Activated naive CD4-positive, alpha-beta T cell treated with anti-CD3 and anti-CD28 coated beads, Interleukin-2, amount 10 ng/mL, durations not matched to agents 7 days and 5 days (primary cell): ENCODE measurements at regions of chr1 and their contacts with region 1.

Region 1: DNA sequence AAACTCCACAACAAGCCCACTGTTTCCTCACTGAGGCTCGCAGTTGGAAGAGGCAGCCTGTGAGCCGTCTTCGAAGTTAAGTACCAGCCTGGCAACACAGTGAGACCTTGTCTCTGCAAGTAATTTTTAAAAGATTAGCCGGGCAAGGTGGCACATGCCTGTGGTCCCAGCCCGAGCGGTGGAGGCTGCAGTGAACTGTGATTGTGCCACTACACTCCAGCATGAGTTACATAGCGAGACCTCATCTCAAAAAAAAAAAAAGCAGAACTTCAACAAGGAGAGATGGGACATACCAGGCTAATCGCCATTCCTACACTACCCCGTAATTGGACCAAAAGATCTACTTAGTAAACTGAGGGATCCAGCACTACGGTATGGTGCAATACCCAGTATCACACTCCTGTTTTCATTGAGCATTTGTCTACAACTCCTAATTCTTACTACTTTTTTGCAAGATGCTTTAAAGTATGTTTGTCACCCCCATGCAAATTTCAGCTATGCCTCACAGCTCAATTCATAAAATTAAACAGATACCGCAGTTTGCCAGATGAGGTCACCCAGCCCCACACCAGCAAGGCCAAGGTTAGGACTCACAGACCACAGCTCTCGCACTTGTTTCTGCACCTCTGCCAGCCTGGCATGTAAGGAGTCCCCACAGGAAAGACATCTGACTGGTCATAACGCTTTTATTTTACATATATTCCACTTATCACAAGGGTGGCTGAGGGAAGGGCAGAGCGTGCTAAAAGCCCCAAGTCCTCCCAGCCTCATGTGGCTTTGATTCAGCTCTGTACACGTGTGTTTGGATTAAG is 21.0 kb downstream of the SDE2 start:
- DNase-seq: no peak
- H3K4me3 Mint-ChIP-seq: no peak overlapping the region
- H3K27ac Mint-ChIP-seq: peak overlapping the region; percentile 60
- H3K4me1 Mint-ChIP-seq: peaks cover 4% of the 10 kb centered on the region
- H3K27me3 Mint-ChIP-seq: no peaks in the 10 kb centered on the region

Region 2: GRCh38 chr1:225179686-225180085 is 798.5 kb before region 1 on chr1:
- CTCF ChIA-PET with region 1: no interaction called
- DNase-seq: no peak
- H3K4me3 Mint-ChIP-seq: no peak overlapping the region
- H3K27ac Mint-ChIP-seq: no peak overlapping the region
- H3K4me1 Mint-ChIP-seq: peaks cover 6% of the 10 kb centered on the region
- H3K27me3 Mint-ChIP-seq: no peaks in the 10 kb centered on the region

Region 3: DNA sequence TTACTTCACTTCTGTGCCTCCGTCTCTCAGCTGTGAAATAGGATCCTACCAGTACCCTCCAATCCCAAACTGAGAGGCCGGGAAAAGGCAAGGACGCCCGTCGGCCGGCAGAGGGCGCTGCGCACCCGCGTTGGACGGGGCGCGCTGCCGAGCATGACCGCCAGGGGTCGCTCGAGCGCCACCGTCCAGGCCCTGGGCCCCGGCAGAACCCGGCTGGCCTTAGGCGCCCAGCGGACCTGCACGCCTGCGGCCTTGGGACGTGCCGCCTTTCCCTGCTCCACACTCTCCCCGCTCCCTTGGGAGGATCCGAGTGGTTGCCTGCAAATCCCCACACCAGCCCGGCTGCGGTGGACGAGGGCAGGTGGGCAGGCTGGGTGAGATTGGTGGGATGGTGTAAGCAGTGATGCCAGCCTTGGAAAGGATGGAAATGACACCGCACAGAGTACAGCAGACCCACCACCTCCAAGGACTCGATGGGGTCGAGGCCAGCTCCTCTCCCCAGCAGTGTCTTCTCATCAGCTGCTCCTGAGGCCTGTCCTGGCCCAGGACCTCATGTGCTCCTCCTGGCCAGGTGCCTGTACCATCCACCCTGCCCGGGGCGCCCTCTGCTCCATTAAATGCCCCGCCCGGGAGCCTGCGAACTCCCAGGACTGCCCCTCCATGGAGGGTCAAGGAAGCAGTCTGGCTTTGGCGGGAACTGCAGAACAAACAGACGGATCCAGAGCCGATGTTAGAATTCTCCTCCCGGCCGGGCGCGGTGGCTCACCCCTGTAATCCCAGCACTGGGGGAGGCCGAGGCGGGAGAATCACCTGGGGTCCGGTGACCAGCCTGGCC is 502.9 kb before region 1 on chr1:
- CTCF ChIA-PET with region 1: interaction called, 32 read pairs
- DNase-seq: peak; percentile 63
- H3K4me3 Mint-ChIP-seq: no peak overlapping the region
- H3K27ac Mint-ChIP-seq: peak overlapping the region; percentile 68
- H3K4me1 Mint-ChIP-seq: peaks cover 67% of the 10 kb centered on the region
- H3K27me3 Mint-ChIP-seq: peaks cover 9% of the 10 kb centered on the region

Region 4: GRCh38 chr1:225480825-225481434 is 497.2 kb before region 1 on chr1:
- CTCF ChIA-PET with region 1: interaction called, 32 read pairs
- DNase-seq: peak; percentile 73
- H3K4me3 Mint-ChIP-seq: no peak overlapping the region
- H3K27ac Mint-ChIP-seq: no peak overlapping the region
- H3K4me1 Mint-ChIP-seq: peaks cover 33% of the 10 kb centered on the region
- H3K27me3 Mint-ChIP-seq: peaks cover 36% of the 10 kb centered on the region

Region 5: GRCh38 chr1:225677350-225678124 is 300.6 kb before region 1 on chr1:
- CTCF ChIA-PET with region 1: no interaction called
- DNase-seq: no peak
- H3K4me3 Mint-ChIP-seq: no peak overlapping the region
- H3K27ac Mint-ChIP-seq: no peak overlapping the region
- H3K4me1 Mint-ChIP-seq: no peaks in the 10 kb centered on the region
- H3K27me3 Mint-ChIP-seq: peaks cover 36% of the 10 kb centered on the region

Region 6: DNA sequence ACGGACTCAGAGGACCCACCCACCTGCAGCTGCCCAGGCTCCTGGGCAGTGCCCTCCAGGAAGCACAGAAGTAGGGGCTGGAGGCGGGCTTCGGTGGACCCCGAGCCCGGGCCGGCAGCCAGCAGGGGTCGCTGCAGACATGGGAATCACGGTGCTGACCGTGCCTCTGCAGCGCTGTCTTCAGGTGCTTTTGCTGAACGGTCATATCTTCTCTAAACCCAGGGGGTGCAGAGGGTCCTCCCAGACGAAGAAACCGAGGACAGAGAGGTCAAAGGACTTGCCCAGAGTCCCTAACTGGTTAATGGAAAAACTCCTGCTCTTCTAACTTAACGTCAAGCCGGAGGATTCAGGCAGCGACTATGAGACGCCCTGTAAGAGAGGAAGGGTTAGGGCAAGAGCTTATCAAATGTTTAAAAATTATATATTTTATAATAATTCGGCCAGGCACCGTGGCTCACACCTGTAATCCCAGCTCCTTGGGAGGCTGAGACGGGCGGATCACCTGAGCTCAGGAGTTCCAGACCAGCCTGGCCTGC is 15.6 kb before region 1 on chr1:
- CTCF ChIA-PET with region 1: interaction called, 27 read pairs
- DNase-seq: peak; percentile 70
- H3K4me3 Mint-ChIP-seq: no peak overlapping the region
- H3K27ac Mint-ChIP-seq: no peak overlapping the region
- H3K4me1 Mint-ChIP-seq: peaks cover 2% of the 10 kb centered on the region
- H3K27me3 Mint-ChIP-seq: peaks cover 31% of the 10 kb centered on the region

Region 7: GRCh38 chr1:226004396-226004795 is 26.3 kb after region 1 on chr1:
- CTCF ChIA-PET with region 1: no interaction called
- DNase-seq: no peak
- H3K4me3 Mint-ChIP-seq: no peak overlapping the region
- H3K27ac Mint-ChIP-seq: peak overlapping the region; percentile 62
- H3K4me1 Mint-ChIP-seq: peaks cover 48% of the 10 kb centered on the region
- H3K27me3 Mint-ChIP-seq: peaks cover 4% of the 10 kb centered on the region

Region 8: GRCh38 chr1:226274138-226274537 is 296.0 kb after region 1 on chr1:
- CTCF ChIA-PET with region 1: no interaction called
- DNase-seq: no peak
- H3K4me3 Mint-ChIP-seq: no peak overlapping the region
- H3K27ac Mint-ChIP-seq: no peak overlapping the region
- H3K4me1 Mint-ChIP-seq: no peaks in the 10 kb centered on the region
- H3K27me3 Mint-ChIP-seq: no peaks in the 10 kb centered on the region